Left lung (tissue), 14 donors: ENCODE measurements at regions of chr12 and their contacts with region 1.

Region 1: DNA sequence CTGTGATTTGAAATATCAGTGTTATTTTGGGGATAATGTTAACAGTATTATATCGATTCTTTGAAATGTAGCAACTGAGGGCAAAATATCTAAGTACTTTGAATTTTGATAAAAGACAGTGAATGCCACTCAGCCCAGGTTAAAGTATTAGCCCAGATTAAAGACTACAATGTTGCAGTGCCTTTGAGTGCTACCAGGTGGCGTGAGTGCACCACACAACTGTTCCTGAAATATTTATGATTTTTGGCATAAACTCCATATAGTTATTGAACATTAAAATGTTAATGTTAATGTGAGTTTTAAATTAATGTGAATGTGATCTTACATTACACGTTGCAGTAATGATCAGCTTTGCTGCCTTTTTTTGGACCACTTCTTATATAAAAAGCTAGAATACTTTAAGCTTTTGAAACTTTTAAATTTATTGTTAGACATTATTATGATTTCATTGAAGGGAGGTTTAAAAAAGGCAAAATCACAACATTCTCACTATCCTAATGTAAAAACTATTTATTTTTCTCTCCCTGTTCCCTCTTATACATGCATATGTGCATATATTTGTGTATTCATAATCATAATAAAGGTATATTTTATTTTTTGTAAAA is 22.5 kb downstream of the MRPS35 start:
- DNase-seq: peak in 2 of 4 donors; percentile 25 to 37
- ATAC-seq: peak; percentile 80
- H3K4me3 ChIP-seq: no peak overlapping the region
- H3K27ac ChIP-seq: no peak overlapping the region
- H3K4me1 ChIP-seq: no peaks in the 10 kb centered on the region
- H3K27me3 ChIP-seq: no peaks in the 10 kb centered on the region
- CTCF ChIP-seq: peak; percentile 54 to 70

Region 2: GRCh38 chr12:27818401-27818918 is 85.3 kb after region 1 on chr12:
- intact Hi-C with region 1: loop called in 1 of 2 experiments (anchors 10 kb)
- DNase-seq: peak in 1 of 4 donors; percentile 44
- ATAC-seq: peak; percentile 20
- H3K4me3 ChIP-seq: no peak overlapping the region
- H3K27ac ChIP-seq: no peak overlapping the region
- H3K4me1 ChIP-seq: peaks cover 6 to 12% of the 10 kb centered on the region in 2 donors
- H3K27me3 ChIP-seq: no peaks in the 10 kb centered on the region
- CTCF ChIP-seq: no peak

Region 3: DNA sequence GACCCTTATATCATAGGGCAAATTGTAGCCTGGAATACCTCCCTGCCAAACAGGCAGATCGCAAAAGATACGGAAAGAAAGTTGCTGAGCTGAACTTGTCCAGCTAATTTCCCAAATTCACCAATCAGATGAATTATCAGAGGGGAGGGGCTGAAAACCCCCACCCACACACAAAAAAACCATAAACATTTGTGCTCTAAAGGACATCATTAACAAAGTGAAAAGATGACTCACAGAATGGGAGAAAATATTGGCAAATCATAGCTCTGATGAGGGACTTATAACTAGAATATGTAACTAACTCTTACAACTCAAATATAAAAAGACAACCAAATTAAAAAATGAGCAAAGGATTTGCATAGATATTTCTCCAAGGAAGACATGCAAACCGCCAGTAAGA is 203.0 kb after region 1 on chr12:
- intact Hi-C with region 1: loop called in 1 of 2 experiments (anchors 10 kb)
- DNase-seq: no peak
- ATAC-seq: no peak
- H3K4me3 ChIP-seq: no peak overlapping the region
- H3K27ac ChIP-seq: no peak overlapping the region
- H3K4me1 ChIP-seq: no peaks in the 10 kb centered on the region
- H3K27me3 ChIP-seq: no peaks in the 10 kb centered on the region
- CTCF ChIP-seq: no peak

Region 4: GRCh38 chr12:27999521-27999920 is 266.4 kb after region 1 on chr12:
- intact Hi-C with region 1: no loop called
- DNase-seq: no peak
- ATAC-seq: peak; percentile 25
- H3K4me3 ChIP-seq: no peak overlapping the region
- H3K27ac ChIP-seq: no peak overlapping the region
- H3K4me1 ChIP-seq: no peaks in the 10 kb centered on the region
- H3K27me3 ChIP-seq: no peaks in the 10 kb centered on the region
- CTCF ChIP-seq: no peak